GM13977 (cell line): ENCODE measurements at regions of chr1 and their contacts with region 1.

Region 1: DNA sequence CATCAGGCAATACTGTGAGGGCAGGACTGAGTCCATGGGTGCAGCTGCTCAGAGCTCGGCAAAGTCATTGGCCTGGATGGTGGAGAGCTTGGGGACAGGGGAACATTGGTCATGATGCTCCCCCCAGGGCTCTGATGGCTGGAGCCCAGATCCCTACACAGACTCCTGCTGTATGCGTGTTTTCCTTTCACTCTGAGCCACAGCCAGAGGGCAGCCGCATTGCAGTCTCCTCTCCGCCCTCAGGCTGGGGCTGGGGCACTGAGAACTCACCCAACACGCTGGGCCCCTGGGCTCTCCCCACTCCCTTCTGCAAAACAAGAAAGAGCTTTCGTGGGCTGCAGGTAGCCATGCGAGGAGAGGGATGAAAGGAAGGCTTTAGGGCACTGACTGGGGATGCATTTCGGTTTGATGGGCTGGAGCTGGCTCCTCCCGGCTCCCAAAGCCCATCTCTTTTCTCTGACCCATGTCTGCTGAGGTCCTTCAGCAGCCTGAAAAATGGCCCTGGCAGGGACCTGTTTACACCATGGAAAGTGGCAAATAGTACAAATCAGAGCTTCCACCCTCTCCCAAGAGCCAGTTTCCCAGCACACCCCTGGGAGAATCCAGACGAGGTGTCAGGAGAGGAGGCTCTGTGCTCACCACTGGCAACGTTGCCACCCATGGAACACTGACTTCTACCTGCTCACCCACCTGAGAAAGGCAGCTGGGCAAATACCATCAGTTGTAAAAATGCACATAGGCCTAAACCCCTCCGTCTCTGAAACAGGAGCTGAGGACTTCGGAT is 43.8 kb downstream of the CAPN2 start:
- DNase-seq: no peak
- CTCF ChIP-seq: no peak

Region 2: DNA sequence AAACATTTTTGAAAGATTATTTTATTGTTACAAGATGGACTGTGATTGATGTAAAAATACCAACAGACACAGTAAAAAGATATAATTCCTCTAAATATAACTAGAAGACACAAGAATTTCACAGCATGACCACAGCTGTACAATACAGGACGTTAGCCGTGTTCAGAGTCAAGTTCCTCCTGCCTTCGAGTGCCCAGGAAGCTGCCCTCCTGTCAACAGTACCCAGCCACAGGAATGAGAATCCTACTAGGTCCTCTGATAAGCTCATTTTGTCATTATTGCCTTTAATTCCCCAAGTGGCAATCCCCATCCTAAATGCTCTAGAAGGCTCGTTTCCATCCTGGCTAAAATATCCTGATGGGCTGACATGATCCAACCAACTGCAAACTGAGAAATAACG is 60.2 kb before region 1 on chr1:
- in situ Hi-C with region 1: loop called (anchors 10 kb)
- DNase-seq: no peak
- CTCF ChIP-seq: no peak